Activated CD4-positive, alpha-beta memory T cell treated with anti-CD3 and anti-CD28 coated beads for 36 hours (primary cell): ENCODE measurements at regions of chr20 and their contacts with region 1.

Region 1: DNA sequence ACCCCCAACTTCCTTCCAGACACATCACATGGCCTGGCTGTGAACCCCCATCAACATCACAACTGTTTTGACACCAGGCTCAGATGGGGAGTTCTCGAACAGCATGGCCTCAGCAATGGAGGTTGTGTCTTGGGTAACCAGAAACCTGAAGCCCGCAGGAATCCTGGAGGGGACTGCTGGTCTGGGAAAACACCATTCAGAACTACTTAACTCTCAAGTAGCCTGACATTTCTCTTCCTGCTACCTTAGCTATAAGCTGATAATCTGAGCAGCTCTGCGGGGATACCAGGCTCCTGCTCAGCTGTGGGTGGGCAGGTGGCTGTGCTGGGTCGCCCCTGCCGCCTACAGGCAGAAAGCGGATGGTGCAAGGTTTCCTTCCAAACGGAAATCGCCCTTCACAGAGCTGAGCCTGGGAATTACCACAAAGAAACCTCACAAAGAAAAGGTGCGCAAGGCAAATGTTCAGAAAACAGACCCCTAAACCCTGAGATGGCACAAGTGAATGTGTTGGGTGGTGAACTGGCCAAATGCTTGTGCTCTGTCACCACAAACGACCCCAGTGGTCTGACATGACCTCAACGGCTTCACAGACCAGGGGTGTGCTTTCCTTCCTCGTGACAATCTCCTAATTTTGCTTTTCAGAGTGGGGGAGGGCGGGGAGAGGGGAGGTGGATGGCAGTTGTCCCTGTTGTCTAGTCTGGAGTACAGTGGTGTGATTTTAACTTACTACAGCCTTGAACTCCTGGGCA is 29.5 kb downstream of the SNX5 start:
- DNase-seq: peak; percentile 70
- H3K4me3 Mint-ChIP-seq: no peak overlapping the region
- H3K27ac Mint-ChIP-seq: peak overlapping the region; percentile 5
- H3K4me1 Mint-ChIP-seq: peaks cover 21% of the 10 kb centered on the region
- H3K27me3 Mint-ChIP-seq: no peaks in the 10 kb centered on the region

Region 2: DNA sequence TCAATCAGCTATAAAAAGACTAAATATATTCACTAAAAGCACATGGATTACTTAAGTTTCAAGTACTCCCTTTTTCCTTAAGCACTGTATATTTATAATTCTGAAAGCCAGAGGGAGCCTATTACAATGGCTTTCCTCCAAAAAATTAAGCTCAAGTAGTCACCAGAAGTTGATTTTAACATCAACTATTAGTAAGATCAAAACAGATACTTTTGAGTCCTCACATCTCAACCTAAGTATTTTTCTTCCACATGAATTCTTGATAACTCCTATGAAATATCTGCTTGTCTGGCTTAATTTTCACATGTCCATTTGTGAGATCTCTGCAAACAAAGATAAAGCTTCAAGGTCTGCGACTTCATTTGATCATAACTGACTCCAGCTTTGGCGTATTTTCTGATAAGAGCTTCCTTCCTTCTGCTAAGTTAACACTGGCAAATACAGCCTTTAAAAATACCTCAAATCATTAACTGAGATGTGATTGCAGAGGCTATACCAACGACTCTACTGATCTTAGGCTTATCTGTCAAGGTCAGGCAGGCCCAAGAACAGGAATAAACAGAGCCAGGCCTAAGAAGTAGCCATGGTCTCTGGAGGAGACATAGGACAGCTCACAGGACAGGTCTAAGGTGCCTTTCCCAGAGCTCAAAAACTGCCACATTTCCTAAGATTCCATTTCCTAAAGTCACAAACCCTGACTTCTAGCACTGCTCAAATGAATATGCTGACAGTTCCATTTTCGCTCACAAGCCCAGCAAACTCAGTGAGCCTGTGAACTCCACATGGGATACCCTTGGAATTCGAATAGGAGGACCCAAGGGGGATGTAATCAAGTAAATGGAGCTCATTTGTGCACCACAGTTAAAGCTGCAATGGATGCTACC is 19.6 kb after region 1 on chr20:
- CTCF ChIA-PET with region 1: interaction called, 5 read pairs
- POLR2A ChIA-PET with region 1: interaction called, 3 read pairs
- intact Hi-C with region 1: loop called (anchors 2 kb)
- DNase-seq: no peak
- H3K4me3 Mint-ChIP-seq: no peak overlapping the region
- H3K27ac Mint-ChIP-seq: peak overlapping the region; percentile 49
- H3K4me1 Mint-ChIP-seq: peaks cover 87% of the 10 kb centered on the region
- H3K27me3 Mint-ChIP-seq: no peaks in the 10 kb centered on the region